Heart right ventricle (tissue), 16 donors: ENCODE measurements at regions of chr7 and their contacts with region 1.

Region 1: GRCh38 chr7:16619979-16620408 is 25.6 kb downstream of the ANKMY2 start:
- DNase-seq: no peak
- ATAC-seq: peak in 4 of 8 donors; percentile 26 to 74 (median 53)
- H3K4me3 ChIP-seq: no peak overlapping the region
- H3K27ac ChIP-seq: no peak overlapping the region
- H3K4me1 ChIP-seq: no peaks in the 10 kb centered on the region
- H3K27me3 ChIP-seq: no peaks in the 10 kb centered on the region
- CTCF ChIP-seq: no peak

Region 2: DNA sequence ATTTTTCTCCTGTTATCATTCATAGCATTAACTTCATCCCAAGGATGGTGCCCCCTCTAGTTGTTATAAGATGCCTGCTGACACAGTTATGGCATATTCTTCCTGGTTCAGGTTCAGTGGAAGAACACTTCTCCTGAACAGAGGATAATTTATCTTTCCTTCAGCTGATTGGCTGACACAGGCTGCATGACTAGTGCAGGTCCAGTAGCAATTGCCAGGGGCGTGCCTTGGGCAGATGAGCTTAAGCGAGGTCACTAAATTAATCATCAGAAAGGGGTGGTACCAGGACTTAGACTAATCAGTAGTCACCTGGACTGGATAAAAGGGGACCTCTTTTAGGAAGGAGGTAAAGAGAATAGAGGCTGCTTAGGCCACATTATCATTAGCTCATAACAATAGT is 68.3 kb after region 1 on chr7:
- intact Hi-C with region 1: loop called in 2 of 10 experiments (anchors 5 to 10 kb)
- DNase-seq: no peak
- ATAC-seq: no peak
- H3K4me3 ChIP-seq: no peak overlapping the region
- H3K27ac ChIP-seq: no peak overlapping the region
- H3K4me1 ChIP-seq: no peaks in the 10 kb centered on the region
- H3K27me3 ChIP-seq: no peaks in the 10 kb centered on the region
- CTCF ChIP-seq: no peak

Region 3: GRCh38 chr7:16926283-16926682 is 306.3 kb after region 1 on chr7:
- intact Hi-C with region 1: loop called in 1 of 10 experiments (anchors 10 kb)
- DNase-seq: peak in 1 of 2 donors; percentile 21
- ATAC-seq: peak in 7 of 8 donors; percentile 52 to 87 (median 81)
- H3K4me3 ChIP-seq: no peak overlapping the region
- H3K27ac ChIP-seq: no peak overlapping the region
- H3K4me1 ChIP-seq: peaks cover 0 to 15% (median 0%) of the 10 kb centered on the region in 9 donors
- H3K27me3 ChIP-seq: no peaks in the 10 kb centered on the region
- CTCF ChIP-seq: peak in 8 of 9 donors; percentile 46 to 76 (median 66)

Region 4: DNA sequence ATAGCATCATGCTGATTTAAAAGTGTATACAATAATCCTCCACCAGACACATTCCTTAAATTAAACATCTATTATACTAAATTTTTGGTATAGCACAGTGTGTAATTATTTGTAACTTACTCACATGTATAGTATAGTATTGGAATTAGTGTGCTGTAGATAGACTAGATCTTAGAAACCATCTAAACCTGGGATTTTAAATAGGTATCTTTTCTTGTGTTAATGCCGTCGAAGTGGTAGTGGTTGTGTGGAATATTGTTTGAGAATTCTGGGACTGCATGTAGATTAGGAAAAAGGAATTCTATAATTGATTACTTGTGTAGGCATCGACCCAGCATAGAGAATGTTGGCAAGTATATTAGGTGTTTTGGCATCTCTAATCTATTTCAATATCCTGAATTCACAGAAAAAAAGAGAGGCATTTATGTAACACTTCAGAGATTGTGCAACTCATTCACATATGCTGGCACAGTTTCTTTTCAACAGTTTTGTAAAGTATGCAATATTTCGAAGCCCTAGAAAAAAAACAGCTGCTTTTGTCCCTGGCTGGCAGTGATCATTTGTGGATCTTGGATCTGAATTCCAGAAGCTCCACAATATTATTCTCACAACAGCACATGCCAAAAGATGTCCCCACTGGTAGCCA is 407.3 kb after region 1 on chr7:
- intact Hi-C with region 1: no loop called
- DNase-seq: no peak
- ATAC-seq: no peak
- H3K4me3 ChIP-seq: no peak overlapping the region
- H3K27ac ChIP-seq: peak overlapping the region in 1 of 10 donors; percentile 74
- H3K4me1 ChIP-seq: peaks cover 0 to 41% (median 0%) of the 10 kb centered on the region in 9 donors
- H3K27me3 ChIP-seq: no peaks in the 10 kb centered on the region
- CTCF ChIP-seq: no peak

Region 5: DNA sequence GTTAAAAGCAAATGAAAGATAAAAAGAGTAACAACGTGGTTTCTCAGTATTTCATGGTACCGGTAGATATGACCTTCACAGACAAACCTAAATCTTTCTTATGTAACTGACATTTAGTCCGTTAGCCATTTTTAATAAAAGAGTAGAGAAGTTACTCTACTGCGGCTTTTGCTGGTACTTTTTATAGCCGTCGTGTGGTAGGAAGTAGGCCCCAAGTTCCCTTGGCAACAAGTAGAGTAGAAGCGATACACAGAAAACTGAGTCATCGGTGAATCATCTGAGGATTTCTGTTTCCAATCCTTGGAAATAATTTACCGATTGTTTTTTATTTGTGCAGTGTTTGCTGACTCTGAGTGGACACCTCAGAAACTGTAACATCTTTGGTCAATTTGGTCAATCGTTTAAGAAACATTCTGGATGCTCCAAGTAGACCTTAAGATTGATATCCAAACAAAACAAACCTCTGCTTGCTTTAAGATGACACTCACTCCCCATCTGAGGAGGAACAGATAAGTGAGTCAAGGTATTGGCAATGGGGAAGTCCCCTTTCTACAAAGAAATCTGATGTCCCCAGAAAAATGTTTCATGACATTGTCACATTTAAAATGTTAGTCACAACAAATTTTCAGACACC is 614.5 kb after region 1 on chr7:
- intact Hi-C with region 1: no loop called
- DNase-seq: peak in 1 of 2 donors; percentile 41
- ATAC-seq: peak in 7 of 8 donors; percentile 65 to 82 (median 76)
- H3K4me3 ChIP-seq: peak overlapping the region in 1 of 10 donors; percentile 4
- H3K27ac ChIP-seq: peak overlapping the region in 6 of 10 donors; percentile 27 to 76 (median 46)
- H3K4me1 ChIP-seq: peaks cover 0 to 43% (median 29%) of the 10 kb centered on the region in 9 donors
- H3K27me3 ChIP-seq: no peaks in the 10 kb centered on the region
- CTCF ChIP-seq: peak in 1 of 9 donors; percentile 6